ENCODE measurements at regions of chr1 and their contacts with region 1.

Region 1: GRCh38 chr1:154760469-154760933 is 109.6 kb downstream of the KCNN3 start:
- DNase-seq: peak; percentile 80
- H3K4me3 Mint-ChIP-seq: peak overlapping the region; percentile 40
- H3K27ac Mint-ChIP-seq: no peak overlapping the region
- H3K4me1 Mint-ChIP-seq: peaks cover 34% of the 10 kb centered on the region
- H3K27me3 Mint-ChIP-seq: peaks cover 36% of the 10 kb centered on the region

Region 2: DNA sequence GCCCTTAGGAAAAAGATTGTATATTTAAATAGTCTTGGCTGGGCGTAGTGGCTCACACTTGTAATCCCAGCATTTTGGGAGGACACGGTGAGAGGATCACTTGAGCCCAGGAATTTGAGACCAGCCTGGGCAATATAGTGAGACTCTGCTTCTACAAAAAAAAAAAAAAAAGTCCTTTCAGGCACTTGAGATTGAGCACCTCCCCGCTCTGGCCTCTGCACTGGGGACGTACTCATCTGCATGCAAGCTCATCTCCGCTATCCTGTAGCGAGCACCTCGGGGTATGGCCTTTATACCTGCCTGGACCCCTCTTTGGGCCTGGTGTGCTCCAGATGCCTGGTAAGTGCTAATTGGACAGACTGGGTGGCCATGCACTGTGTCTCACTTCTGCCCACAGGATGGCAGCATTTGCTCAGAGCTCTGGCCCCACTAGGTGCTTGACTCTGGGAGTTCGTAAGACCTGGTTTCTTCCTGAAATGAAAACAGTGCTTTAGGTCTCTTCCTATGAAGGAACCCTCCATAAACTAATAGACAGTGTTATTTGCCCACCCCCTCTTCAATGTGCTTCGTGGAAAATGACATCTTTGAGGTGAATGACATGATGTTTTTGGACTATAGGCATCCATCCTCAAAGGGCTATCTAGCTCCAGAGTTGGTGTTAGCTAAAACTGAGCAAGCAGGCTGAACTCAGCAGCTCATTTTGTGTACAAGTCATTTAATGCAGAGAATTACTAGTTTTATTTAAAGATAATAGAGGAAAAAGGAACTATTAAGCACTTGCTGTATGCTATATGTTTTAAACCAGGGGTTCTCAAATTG is 90.8 kb before region 1 on chr1:
- CTCF ChIA-PET with region 1: interaction called, 17 read pairs
- POLR2A ChIA-PET with region 1: no interaction called
- DNase-seq: peak; percentile 78
- H3K4me3 Mint-ChIP-seq: no peak overlapping the region
- H3K27ac Mint-ChIP-seq: no peak overlapping the region
- H3K4me1 Mint-ChIP-seq: peaks cover 2% of the 10 kb centered on the region
- H3K27me3 Mint-ChIP-seq: peaks cover 7% of the 10 kb centered on the region

Region 3: GRCh38 chr1:154707901-154708463 is 52.5 kb before region 1 on chr1:
- CTCF ChIA-PET with region 1: no interaction called
- POLR2A ChIA-PET with region 1: no interaction called
- DNase-seq: no peak
- H3K4me3 Mint-ChIP-seq: no peak overlapping the region
- H3K27ac Mint-ChIP-seq: no peak overlapping the region
- H3K4me1 Mint-ChIP-seq: no peaks in the 10 kb centered on the region
- H3K27me3 Mint-ChIP-seq: peaks cover 39% of the 10 kb centered on the region

Region 4: DNA sequence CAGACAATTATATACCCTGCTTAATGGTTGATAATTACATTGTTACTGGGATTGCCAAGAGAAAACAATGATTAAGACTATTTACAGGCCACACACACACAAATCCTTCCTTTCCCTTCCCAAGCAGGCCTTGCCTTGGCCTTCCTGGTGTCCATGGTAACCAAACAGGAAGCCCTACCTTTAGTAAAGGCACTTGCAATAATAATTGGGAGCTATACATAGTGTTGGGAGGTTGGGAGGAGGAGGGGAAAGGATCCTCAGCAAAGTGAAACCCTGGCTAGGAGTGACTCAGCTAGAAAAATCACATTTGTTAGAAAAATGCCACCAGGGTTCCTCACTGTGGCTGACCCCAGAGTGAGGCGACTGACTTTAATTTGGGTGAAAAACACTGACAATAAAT is 30.2 kb before region 1 on chr1:
- CTCF ChIA-PET with region 1: no interaction called
- POLR2A ChIA-PET with region 1: no interaction called
- DNase-seq: no peak
- H3K4me3 Mint-ChIP-seq: no peak overlapping the region
- H3K27ac Mint-ChIP-seq: no peak overlapping the region
- H3K4me1 Mint-ChIP-seq: peaks cover 34% of the 10 kb centered on the region
- H3K27me3 Mint-ChIP-seq: peaks cover 79% of the 10 kb centered on the region

Region 5: DNA sequence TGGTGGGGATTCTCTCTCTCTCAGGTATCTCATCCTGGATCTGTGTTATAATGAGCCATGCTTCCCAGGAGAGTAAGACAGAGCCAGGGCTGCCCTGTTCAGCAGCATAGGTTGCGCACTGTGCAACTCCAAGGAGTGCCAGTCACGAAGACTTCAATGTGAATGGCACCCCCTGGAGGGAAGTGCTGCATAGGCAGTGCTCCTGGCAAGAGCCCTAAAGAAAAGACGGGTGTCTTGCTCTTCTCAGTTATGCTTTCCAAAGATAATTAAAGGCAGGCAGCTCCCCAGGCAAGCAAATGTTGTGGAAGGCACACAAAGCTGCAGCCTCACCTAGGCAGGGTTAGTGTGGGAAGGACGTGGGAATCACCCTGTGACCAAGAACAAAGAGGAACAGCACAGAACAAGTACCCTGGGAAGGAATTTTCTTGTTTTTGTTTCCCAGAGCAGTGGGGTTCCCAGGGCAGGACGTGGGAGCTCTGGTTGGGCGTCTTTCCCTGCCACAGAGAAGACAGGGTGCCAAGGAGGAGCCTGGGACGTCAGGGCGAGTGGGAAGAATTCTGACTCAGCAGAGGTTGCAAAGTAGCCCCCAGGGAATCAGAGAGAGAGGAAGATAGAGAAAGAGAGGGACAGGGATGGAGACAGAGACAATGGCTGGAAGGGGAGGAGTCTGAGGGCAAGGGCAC is 11.3 kb before region 1 on chr1:
- CTCF ChIA-PET with region 1: interaction called, 12 read pairs
- POLR2A ChIA-PET with region 1: interaction called, 3 read pairs
- DNase-seq: peak; percentile 44
- H3K4me3 Mint-ChIP-seq: no peak overlapping the region
- H3K27ac Mint-ChIP-seq: no peak overlapping the region
- H3K4me1 Mint-ChIP-seq: peaks cover 53% of the 10 kb centered on the region
- H3K27me3 Mint-ChIP-seq: peaks cover 81% of the 10 kb centered on the region

Measured in activated CD4-positive, alpha-beta memory T cell treated with anti-CD3 and anti-CD28 coated beads, Interleukin-2, amount 10 ng/mL, durations not matched to agents 7 days and 5 days (primary cell).